Naive thymus-derived CD8-positive, alpha-beta T cell (primary cell): ENCODE measurements at regions of chr11 and their contacts with region 1.

Region 1: GRCh38 chr11:62705880-62706849 is 1.1 kb downstream of the BSCL2 start:
- DNase-seq: peak; percentile 89 to 98 (median 94)
- ATAC-seq: peak; percentile 62
- H3K4me3 Mint-ChIP-seq: peak overlapping the region; percentile 85 to 95 (median 90)
- H3K27ac Mint-ChIP-seq: peak overlapping the region; percentile 88 to 100 (median 96)
- H3K4me1 Mint-ChIP-seq: peaks cover 24 to 56% (median 42%) of the 10 kb centered on the region in 4 donors
- H3K27me3 Mint-ChIP-seq: no peaks in the 10 kb centered on the region

Region 2: GRCh38 chr11:62601394-62602140 is 104.6 kb before region 1 on chr11 and contains the start of gene MTA2:
- POLR2A ChIA-PET with region 1: interaction called, 13 read pairs
- DNase-seq: peak; percentile 95 to 100 (median 99)
- ATAC-seq: peak; percentile 82 to 83
- H3K4me3 Mint-ChIP-seq: peak within 1 kb of the TSS; percentile 88 to 95 (median 92)
- H3K27ac Mint-ChIP-seq: peak within 1 kb of the TSS; percentile 93 to 97 (median 96)
- H3K4me1 Mint-ChIP-seq: peaks cover 37 to 66% (median 62%) of the 10 kb centered on the region in 4 donors
- H3K27me3 Mint-ChIP-seq: no peaks in the 10 kb centered on the region
- polyA plus RNA-seq, gene MTA2: 15.8 to 32.6 (median 21.5) TPM

Region 3: GRCh38 chr11:62652161-62653006 is 53.8 kb before region 1 on chr11:
- POLR2A ChIA-PET with region 1: interaction called, 11 read pairs
- DNase-seq: peak in 4 of 10 donors; percentile 34 to 57 (median 44)
- ATAC-seq: peak; percentile 6 to 49
- H3K4me3 Mint-ChIP-seq: peak overlapping the region; percentile 86 to 96 (median 92)
- H3K27ac Mint-ChIP-seq: peak overlapping the region; percentile 82 to 100 (median 94)
- H3K4me1 Mint-ChIP-seq: peaks cover 12 to 37% (median 21%) of the 10 kb centered on the region in 4 donors
- H3K27me3 Mint-ChIP-seq: no peaks in the 10 kb centered on the region

Region 4: DNA sequence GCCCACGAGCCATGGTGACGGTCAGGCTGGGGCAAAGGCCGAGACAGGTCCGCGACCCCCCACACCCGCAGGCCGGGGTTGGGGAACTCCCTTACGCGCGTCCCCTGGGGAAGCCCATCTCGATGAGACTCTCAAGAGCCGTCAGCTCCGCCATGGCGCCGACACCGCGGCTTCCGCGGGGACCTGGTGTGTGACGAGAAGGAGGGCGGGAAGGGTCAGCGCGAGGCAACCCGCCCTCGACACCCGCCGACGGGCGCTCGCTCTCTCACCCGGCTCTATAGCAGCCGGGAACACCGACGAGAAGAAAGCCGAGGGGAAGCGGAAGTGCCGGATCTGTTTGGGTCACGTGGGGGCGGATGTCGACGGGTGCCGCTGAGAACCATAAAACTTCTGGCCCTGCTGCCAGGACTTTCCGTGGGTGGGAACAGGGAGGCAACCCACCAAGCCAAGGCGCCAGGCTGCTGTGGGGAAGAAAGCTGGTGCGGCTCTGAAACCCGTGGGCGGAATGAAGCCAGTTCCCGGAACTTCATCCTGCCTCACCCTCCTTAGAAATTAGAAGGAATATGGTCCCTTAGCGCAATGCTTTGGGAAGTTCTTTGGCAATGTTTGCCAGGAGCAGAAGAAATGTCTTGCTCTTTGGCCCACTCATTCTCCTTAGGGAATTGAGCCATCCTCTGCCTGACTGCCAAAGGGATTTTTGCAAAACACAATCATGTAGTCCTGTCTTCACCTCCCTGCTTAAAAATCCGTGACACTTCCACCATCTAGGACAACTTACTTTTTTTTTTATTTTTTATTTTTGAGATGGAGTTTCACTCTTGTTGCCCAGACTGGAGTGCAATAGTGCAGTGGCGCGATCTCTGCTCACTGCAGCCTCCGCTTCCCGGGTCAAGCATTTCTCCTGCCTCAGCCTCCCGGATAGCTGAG is 27.1 kb before region 1 on chr11 and contains the start of gene UBXN1:
- POLR2A ChIA-PET with region 1: interaction called, 11 read pairs
- DNase-seq: peak; percentile 68 to 89 (median 78)
- ATAC-seq: peak; percentile 84 to 87
- H3K4me3 Mint-ChIP-seq: peak within 1 kb of the TSS; percentile 86 to 94 (median 90)
- H3K27ac Mint-ChIP-seq: peak within 1 kb of the TSS; percentile 94 to 98 (median 95)
- H3K4me1 Mint-ChIP-seq: peaks cover 19 to 42% (median 38%) of the 10 kb centered on the region in 4 donors
- H3K27me3 Mint-ChIP-seq: no peaks in the 10 kb centered on the region
- polyA plus RNA-seq, gene UBXN1: 188 to 219 (median 218) TPM

Region 5: DNA sequence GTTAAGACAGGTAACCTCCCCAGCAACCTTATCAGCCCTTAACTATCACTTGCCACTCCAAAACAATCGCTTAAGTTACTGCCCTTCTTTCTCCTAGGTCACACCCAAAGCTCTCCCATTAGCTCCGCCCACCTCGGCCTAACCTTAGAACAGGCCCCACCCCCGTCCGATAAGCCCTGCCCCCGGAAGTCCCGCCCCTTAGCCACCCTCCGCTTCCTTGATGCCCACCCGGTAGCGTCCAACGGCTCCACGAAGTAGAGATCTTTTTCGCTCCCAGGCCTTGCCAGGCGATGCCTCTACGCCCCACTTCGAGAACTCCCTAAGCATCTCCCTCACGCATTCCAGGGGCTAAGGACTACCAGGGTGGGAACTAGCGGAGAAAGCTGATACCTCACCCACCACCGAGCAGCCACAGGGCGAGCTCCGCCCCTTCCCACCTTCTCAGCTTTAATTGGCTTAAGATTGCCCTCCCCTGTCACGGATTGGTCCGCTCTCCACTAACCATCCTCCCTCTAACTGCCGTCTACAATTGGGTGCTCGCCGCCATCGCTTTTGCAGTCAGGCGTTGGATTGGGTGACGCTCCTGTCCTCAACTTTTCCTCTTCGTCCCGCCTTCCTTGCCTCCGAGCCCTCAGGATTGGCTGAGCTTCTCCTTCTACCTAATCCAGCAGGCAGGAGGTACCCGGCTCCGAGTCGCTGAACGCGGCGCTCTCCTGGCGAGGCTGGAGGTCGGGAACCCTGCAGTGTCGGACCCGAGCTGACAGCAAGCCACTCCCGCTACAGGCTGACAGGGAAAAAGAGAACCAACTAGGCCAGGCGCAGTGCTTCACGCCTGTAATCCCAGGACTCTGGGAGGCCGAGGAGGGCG is 47.8 kb after region 1 on chr11 and contains the start of gene ZBTB3:
- POLR2A ChIA-PET with region 1: interaction called, 71 read pairs
- DNase-seq: peak; percentile 93 to 100 (median 96)
- ATAC-seq: peak; percentile 95 to 96
- H3K4me3 Mint-ChIP-seq: peak within 1 kb of the TSS; percentile 91 to 100 (median 97)
- H3K27ac Mint-ChIP-seq: peak within 1 kb of the TSS; percentile 88 to 100 (median 99)
- H3K4me1 Mint-ChIP-seq: peaks cover 8 to 43% (median 28%) of the 10 kb centered on the region in 4 donors
- H3K27me3 Mint-ChIP-seq: no peaks in the 10 kb centered on the region
- polyA plus RNA-seq, gene ZBTB3: 2.1 to 6.7 (median 3.6) TPM

Region 6: GRCh38 chr11:62841361-62842184 is 135.4 kb after region 1 on chr11:
- POLR2A ChIA-PET with region 1: interaction called, 98 read pairs
- DNase-seq: peak; percentile 54 to 94 (median 86)
- ATAC-seq: peak; percentile 57 to 61
- H3K4me3 Mint-ChIP-seq: no peak overlapping the region
- H3K27ac Mint-ChIP-seq: no peak overlapping the region
- H3K4me1 Mint-ChIP-seq: peaks cover 13 to 31% (median 25%) of the 10 kb centered on the region in 4 donors
- H3K27me3 Mint-ChIP-seq: no peaks in the 10 kb centered on the region